ENCODE measurements at regions of chr21 and their contacts with region 1.

Region 1: DNA sequence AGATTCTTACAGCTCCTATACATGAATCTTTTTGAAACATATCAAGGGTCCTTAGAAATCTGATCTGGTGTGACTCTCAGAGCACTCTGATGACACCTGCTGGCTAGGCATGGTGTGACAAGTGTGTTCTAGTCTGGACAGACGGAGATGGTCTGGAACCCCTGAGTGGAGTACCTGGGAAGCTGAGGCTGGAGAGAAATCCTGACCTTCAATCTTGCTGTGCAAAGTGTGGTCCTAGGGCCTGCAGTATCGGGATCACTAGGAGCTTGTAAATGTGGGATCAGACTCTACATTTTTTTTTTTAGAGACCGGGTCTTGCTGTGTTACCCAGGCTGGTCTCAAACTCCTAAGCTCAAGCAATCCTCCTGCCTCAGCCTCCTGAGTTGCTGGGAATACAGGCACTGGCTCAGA is 78.6 kb upstream of the SOD1 start:
- DNase-seq: peak; percentile 35 to 54
- ATAC-seq: peak; percentile 73 to 88
- H3K4me3 ChIP-seq: no peak overlapping the region
- H3K27ac ChIP-seq: no peak overlapping the region
- H3K4me1 ChIP-seq: no peaks in the 10 kb centered on the region
- CTCF ChIP-seq: peak; percentile 67
- EP300 ChIP-seq: no peak
- POLR2A ChIP-seq: no peak
- RAD21 ChIP-seq: peak; percentile 66 to 75

Region 2: GRCh38 chr21:31198575-31198974 is 382.3 kb before region 1 on chr21:
- CTCF ChIA-PET with region 1: interaction called, 110 read pairs
- POLR2A ChIA-PET with region 1: no interaction called
- DNase-seq: peak; percentile 13 to 36
- ATAC-seq: peak; percentile 57 to 70; a peak in 4 of 6 replicates
- H3K4me3 ChIP-seq: no peak overlapping the region
- H3K27ac ChIP-seq: no peak overlapping the region
- H3K4me1 ChIP-seq: no peaks in the 10 kb centered on the region
- CTCF ChIP-seq: peak; percentile 63
- EP300 ChIP-seq: no peak
- POLR2A ChIP-seq: no peak
- RAD21 ChIP-seq: peak; percentile 59 to 71

Region 3: DNA sequence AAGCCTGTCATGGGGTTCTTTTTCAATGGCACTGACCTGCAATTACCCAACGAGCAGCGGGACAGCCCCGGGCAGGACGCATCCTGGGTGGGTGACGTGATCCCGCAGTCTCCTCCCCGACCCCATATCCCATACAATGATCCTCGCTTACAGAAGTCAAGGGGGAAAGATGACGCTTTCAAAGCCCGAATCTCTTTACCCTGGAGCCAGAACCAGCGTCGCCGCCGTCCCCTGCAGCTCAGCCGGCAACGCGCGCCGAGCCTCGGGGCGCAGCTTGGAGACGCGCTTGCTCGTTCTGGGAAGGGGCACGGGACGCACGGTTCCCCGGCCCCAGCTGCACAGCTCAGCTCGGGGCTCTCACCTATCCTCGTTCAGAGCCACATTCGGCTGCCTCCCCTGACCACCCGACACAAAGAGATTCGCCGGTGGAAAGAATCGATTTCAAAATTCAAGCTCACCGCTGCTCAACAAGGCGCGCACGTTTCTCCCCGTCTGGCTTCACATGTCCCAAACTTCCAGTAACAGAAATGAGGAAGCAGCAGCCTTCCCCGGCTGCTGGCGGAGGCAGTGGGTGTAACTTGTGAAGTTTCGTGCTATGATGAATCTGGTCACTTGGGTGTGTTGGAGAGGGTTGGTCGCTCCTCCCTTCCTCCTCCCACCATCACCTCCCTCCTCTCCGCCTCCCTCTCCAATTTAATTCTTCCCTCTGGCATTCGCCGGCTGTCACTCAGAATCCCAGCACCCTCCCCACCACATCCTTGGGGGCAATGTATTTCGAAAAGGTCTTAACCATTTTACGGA is 237.0 kb before region 1 on chr21 and contains the start of gene TIAM1:
- CTCF ChIA-PET with region 1: interaction called, 12 read pairs
- POLR2A ChIA-PET with region 1: no interaction called
- DNase-seq: peak in 1 of 2 experiments; percentile 4
- ATAC-seq: no peak
- H3K4me3 ChIP-seq: no peak within 1 kb of the TSS
- H3K27ac ChIP-seq: no peak within 1 kb of the TSS
- H3K4me1 ChIP-seq: no peaks in the 10 kb centered on the region
- CTCF ChIP-seq: no peak
- EP300 ChIP-seq: no peak
- POLR2A ChIP-seq: no peak
- RAD21 ChIP-seq: no peak
- polyA plus RNA-seq, gene TIAM1: 0.26 and 0.40 TPM in 2 replicates

Region 4: DNA sequence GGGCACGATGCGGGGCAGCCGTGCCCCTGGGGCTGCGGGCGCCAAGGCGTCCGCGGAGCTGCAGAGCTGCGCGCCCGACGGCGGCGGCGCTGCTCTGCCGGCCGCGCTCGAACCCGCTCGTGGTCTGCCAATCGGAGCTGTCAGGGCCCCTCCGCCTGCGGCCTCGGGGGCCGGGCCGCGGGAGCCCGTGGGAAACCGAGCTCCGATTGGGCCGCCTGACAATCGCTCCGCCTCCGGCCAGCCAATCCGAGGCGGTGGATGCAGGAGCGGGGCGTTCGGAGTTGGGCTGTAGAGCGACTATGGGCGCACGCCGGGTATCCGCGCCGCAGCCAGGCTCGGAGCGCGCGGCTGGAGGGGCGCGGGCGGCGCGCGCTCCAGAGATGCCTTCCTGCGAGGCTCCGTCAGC is 21.9 kb before region 1 on chr21:
- CTCF ChIA-PET with region 1: interaction called, 29 read pairs
- POLR2A ChIA-PET with region 1: no interaction called
- DNase-seq: peak; percentile 88 to 89
- ATAC-seq: peak; percentile 96
- H3K4me3 ChIP-seq: peak overlapping the region; percentile 46
- H3K27ac ChIP-seq: peak overlapping the region in 1 of 2 experiments; percentile 83; a peak in 5 of 6 replicates
- H3K4me1 ChIP-seq: peaks cover 15% of the 10 kb centered on the region; the same call in 1 of the 3 replicates
- CTCF ChIP-seq: no peak; the same call in 2 of the 3 replicates
- EP300 ChIP-seq: no peak
- POLR2A ChIP-seq: no peak
- RAD21 ChIP-seq: no peak

Region 5: GRCh38 chr21:31612894-31613745 is 32.2 kb after region 1 on chr21:
- CTCF ChIA-PET with region 1: interaction called, 12 read pairs
- POLR2A ChIA-PET with region 1: no interaction called
- DNase-seq: no peak
- ATAC-seq: peak; percentile 30 to 42; a peak in 3 of 6 replicates
- H3K4me3 ChIP-seq: no peak overlapping the region
- H3K27ac ChIP-seq: no peak overlapping the region
- H3K4me1 ChIP-seq: no peaks in the 10 kb centered on the region
- CTCF ChIP-seq: no peak
- EP300 ChIP-seq: no peak
- POLR2A ChIP-seq: no peak
- RAD21 ChIP-seq: no peak